CD4-positive, alpha-beta memory T cell (primary cell): ENCODE measurements at regions of chr6 and their contacts with region 1.

Region 1: GRCh38 chr6:37691904-37692806 is 5.5 kb downstream of the MDGA1 start:
- DNase-seq: peak; percentile 69 to 80 (median 73)
- H3K4me3 ChIP-seq: no peak overlapping the region
- H3K4me3 Mint-ChIP-seq: peak overlapping the region in 1 of 8 donors; percentile 30
- H3K27ac ChIP-seq: no peak overlapping the region
- H3K27ac Mint-ChIP-seq: peak overlapping the region in 1 of 7 donors; percentile 21
- H3K4me1 ChIP-seq: peaks cover 17% of the 10 kb centered on the region
- H3K4me1 Mint-ChIP-seq: peaks cover 12 to 53% (median 19%) of the 10 kb centered on the region in 4 donors
- H3K27me3 ChIP-seq: peaks cover 14% of the 10 kb centered on the region
- H3K27me3 Mint-ChIP-seq: no peaks in the 10 kb centered on the region

Region 2: DNA sequence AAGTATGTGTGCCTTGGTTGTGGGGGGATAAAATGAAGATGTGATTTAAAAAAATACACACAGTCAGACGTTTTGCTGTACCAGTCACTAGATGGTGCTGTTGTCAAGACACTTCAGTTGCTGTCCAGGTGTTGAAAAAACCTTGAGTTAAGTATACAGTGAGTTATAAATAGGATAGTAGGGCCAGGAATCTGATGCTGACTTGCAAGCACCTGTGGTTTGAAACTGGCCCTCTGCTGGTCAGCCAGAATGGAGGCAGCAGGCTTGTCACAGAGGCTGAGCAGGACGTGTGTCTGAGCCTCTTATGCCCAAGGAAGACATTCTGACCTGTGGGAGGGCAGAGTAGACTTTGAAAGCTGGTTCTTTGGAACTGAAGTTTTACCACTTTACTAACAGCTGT is 310.6 kb before region 1 on chr6:
- CTCF ChIA-PET with region 1: interaction called, 5 read pairs
- POLR2A ChIA-PET with region 1: no interaction called
- intact Hi-C with region 1: loop called (anchors 1 kb)
- DNase-seq: peak; percentile 41 to 55 (median 45)
- H3K4me3 ChIP-seq: no peak overlapping the region
- H3K4me3 Mint-ChIP-seq: no peak overlapping the region
- H3K27ac ChIP-seq: no peak overlapping the region
- H3K27ac Mint-ChIP-seq: peak overlapping the region in 2 of 7 donors; percentile 25 to 33
- H3K4me1 ChIP-seq: no peaks in the 10 kb centered on the region
- H3K4me1 Mint-ChIP-seq: peaks cover 0 to 2% (median 0%) of the 10 kb centered on the region in 4 donors
- H3K27me3 ChIP-seq: no peaks in the 10 kb centered on the region
- H3K27me3 Mint-ChIP-seq: no peaks in the 10 kb centered on the region

Region 3: GRCh38 chr6:37483917-37484785 is 208.0 kb before region 1 on chr6:
- CTCF ChIA-PET with region 1: interaction called, 27 read pairs
- POLR2A ChIA-PET with region 1: no interaction called
- intact Hi-C with region 1: loop called (anchors 1 kb)
- DNase-seq: peak; percentile 74 to 81 (median 76)
- H3K4me3 ChIP-seq: no peak overlapping the region
- H3K4me3 Mint-ChIP-seq: no peak overlapping the region
- H3K27ac ChIP-seq: peak overlapping the region; percentile 30
- H3K27ac Mint-ChIP-seq: peak overlapping the region; percentile 15 to 97 (median 68)
- H3K4me1 ChIP-seq: peaks cover 34% of the 10 kb centered on the region
- H3K4me1 Mint-ChIP-seq: peaks cover 15 to 32% (median 24%) of the 10 kb centered on the region in 4 donors
- H3K27me3 ChIP-seq: no peaks in the 10 kb centered on the region
- H3K27me3 Mint-ChIP-seq: no peaks in the 10 kb centered on the region

Region 4: GRCh38 chr6:38671885-38672467 is 979.8 kb after region 1 on chr6:
- CTCF ChIA-PET with region 1: no interaction called
- POLR2A ChIA-PET with region 1: no interaction called
- intact Hi-C with region 1: loop called (anchors 10 kb)
- DNase-seq: peak; percentile 33 to 46 (median 42)
- H3K4me3 ChIP-seq: no peak overlapping the region
- H3K4me3 Mint-ChIP-seq: no peak overlapping the region
- H3K27ac ChIP-seq: no peak overlapping the region
- H3K27ac Mint-ChIP-seq: peak overlapping the region in 2 of 7 donors; percentile 22 to 51
- H3K4me1 ChIP-seq: peaks cover 9% of the 10 kb centered on the region
- H3K4me1 Mint-ChIP-seq: peaks cover 9 to 21% (median 17%) of the 10 kb centered on the region in 4 donors
- H3K27me3 ChIP-seq: no peaks in the 10 kb centered on the region
- H3K27me3 Mint-ChIP-seq: no peaks in the 10 kb centered on the region